H1 (cell line): ENCODE measurements at regions of chr20 and their contacts with region 1.

Region 1: GRCh38 chr20:10487142-10488136 is 52.3 kb downstream of the SLX4IP start:
- DNase-seq: no peak
- H3K4me3 ChIP-seq: no peak overlapping the region
- H3K27ac ChIP-seq: no peak overlapping the region
- H3K4me1 ChIP-seq: peaks cover 0 to 23% (median 4%) of the 10 kb centered on the region in 4 experiments; a peak in 6 of 7 replicates
- H3K27me3 ChIP-seq: no peaks in the 10 kb centered on the region
- CTCF ChIP-seq: no peak
- EP300 ChIP-seq: no peak
- POLR2A ChIP-seq: no peak
- RAD21 ChIP-seq: no peak

Region 2: GRCh38 chr20:10381493-10381892 is 105.9 kb before region 1 on chr20:
- CTCF ChIA-PET with region 1: no interaction called
- POLR2A ChIA-PET with region 1: no interaction called
- DNase-seq: no peak
- H3K4me3 ChIP-seq: no peak overlapping the region
- H3K27ac ChIP-seq: no peak overlapping the region
- H3K4me1 ChIP-seq: no peaks in the 10 kb centered on the region; a peak in 1 of 7 replicates
- H3K27me3 ChIP-seq: no peaks in the 10 kb centered on the region
- CTCF ChIP-seq: peak in 1 of 3 experiments; percentile 13; a peak in 1 of 4 replicates
- EP300 ChIP-seq: no peak
- POLR2A ChIP-seq: no peak
- RAD21 ChIP-seq: peak; percentile 39 to 44

Region 3: GRCh38 chr20:10465133-10465532 is 22.3 kb before region 1 on chr20:
- CTCF ChIA-PET with region 1: no interaction called
- POLR2A ChIA-PET with region 1: no interaction called
- DNase-seq: no peak
- H3K4me3 ChIP-seq: no peak overlapping the region
- H3K27ac ChIP-seq: 0 out of 2 replicates have a peak overlapping the region, but pooled peaks have one; percentile 29
- H3K4me1 ChIP-seq: peaks cover 0 to 26% (median 21%) of the 10 kb centered on the region in 4 experiments; a peak in 5 of 7 replicates
- H3K27me3 ChIP-seq: no peaks in the 10 kb centered on the region
- CTCF ChIP-seq: no peak
- EP300 ChIP-seq: no peak
- POLR2A ChIP-seq: no peak
- RAD21 ChIP-seq: no peak

Region 4: DNA sequence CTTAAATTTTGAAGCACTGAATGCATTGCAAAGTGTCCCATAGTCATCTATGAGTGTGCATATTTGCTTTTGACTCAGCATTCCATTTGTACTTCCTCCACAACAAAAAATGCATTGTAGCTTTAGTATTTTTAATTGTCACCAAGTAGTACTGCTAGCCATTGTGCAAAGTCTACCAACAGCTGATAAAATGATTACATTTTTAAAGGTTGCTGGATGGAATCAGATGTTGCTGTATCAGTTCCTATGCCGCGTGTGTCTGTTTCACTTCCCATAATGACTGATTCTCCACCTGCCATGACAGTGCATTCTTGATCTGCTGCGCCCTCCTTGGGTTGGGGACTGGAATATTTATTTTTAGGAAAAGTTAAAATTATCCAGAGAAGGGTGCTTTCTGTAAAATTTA is 11.1 kb before region 1 on chr20:
- CTCF ChIA-PET with region 1: interaction called, 11 read pairs
- POLR2A ChIA-PET with region 1: no interaction called
- DNase-seq: no peak
- H3K4me3 ChIP-seq: no peak overlapping the region
- H3K27ac ChIP-seq: no peak overlapping the region
- H3K4me1 ChIP-seq: peaks cover 0 to 13% (median 3%) of the 10 kb centered on the region in 4 experiments; a peak in 4 of 7 replicates
- H3K27me3 ChIP-seq: no peaks in the 10 kb centered on the region
- CTCF ChIP-seq: no peak
- EP300 ChIP-seq: no peak
- POLR2A ChIP-seq: no peak
- RAD21 ChIP-seq: no peak; a peak in 1 of 4 replicates

Region 5: DNA sequence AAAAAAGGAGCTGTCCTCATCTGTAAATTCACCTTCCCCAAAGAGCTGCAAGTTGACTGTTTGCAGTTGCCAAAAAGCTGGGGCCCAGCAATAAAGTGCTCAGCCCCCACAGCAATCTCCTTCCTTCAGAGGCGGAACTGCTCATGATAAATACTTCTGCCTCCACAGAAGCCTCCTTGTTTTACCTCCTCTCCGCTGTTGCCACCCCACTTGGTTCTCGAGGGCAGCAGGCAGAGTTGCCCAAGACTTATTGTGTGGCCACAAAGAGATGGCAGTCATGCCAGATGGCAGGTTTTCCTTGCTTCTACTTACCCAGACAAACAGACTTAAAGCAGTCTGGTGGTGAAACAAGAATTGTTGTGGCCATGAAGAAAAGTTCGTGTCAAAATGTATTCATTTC is 14.0 kb after region 1 on chr20:
- CTCF ChIA-PET with region 1: no interaction called
- POLR2A ChIA-PET with region 1: no interaction called
- DNase-seq: no peak
- H3K4me3 ChIP-seq: peak overlapping the region in 1 of 4 experiments; percentile 4; a peak in 1 of 8 replicates
- H3K27ac ChIP-seq: no peak overlapping the region
- H3K4me1 ChIP-seq: peaks cover 5 to 15% (median 10%) of the 10 kb centered on the region in 4 experiments; a peak in 6 of 7 replicates
- H3K27me3 ChIP-seq: no peaks in the 10 kb centered on the region
- CTCF ChIP-seq: no peak
- EP300 ChIP-seq: no peak
- POLR2A ChIP-seq: no peak
- RAD21 ChIP-seq: no peak